ENCODE measurements at regions of chr16 and their contacts with region 1.

Region 1: GRCh38 chr16:14632692-14633569 is at the start of gene BFAR:
- DNase-seq: peak; percentile 87 to 99
- H3K4me3 ChIP-seq: peak within 1 kb of the TSS; percentile 88
- H3K27ac ChIP-seq: peak within 1 kb of the TSS; percentile 69
- H3K4me1 ChIP-seq: peaks cover 33% of the 10 kb centered on the region
- H3K27me3 ChIP-seq: no peaks in the 10 kb centered on the region
- CTCF ChIP-seq: no peak
- total RNA-seq, gene BFAR: 94.8 and 97.9 TPM in 2 replicates

Region 2: DNA sequence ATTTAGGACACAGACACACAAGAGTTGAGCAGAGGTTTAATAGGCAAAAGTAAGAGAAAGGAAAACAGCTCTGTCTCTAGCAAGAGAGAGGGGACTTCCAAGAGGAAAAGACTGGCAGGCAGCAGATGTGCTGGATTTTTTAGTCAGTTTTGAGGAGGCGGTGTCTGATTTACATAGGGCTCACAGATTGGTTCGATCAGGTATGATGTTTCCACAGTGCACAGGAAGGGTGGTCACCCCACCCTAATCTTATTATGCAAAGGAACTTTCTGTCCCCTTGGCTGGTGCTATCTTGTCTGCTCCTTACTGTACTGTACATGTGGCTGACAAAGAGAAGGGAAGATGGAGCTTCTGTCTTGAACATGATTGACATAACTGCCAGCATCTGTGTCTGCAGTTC is 25.1 kb after region 1 on chr16:
- CTCF ChIA-PET with region 1: interaction called, 11 read pairs
- POLR2A ChIA-PET with region 1: interaction called, 5 read pairs
- intact Hi-C with region 1: no loop called
- DNase-seq: no peak
- H3K4me3 ChIP-seq: no peak overlapping the region
- H3K27ac ChIP-seq: 0 out of 2 replicates have a peak overlapping the region, but pooled peaks have one; percentile 23
- H3K4me1 ChIP-seq: peaks cover 21% of the 10 kb centered on the region
- H3K27me3 ChIP-seq: no peaks in the 10 kb centered on the region
- CTCF ChIP-seq: no peak

Region 3: DNA sequence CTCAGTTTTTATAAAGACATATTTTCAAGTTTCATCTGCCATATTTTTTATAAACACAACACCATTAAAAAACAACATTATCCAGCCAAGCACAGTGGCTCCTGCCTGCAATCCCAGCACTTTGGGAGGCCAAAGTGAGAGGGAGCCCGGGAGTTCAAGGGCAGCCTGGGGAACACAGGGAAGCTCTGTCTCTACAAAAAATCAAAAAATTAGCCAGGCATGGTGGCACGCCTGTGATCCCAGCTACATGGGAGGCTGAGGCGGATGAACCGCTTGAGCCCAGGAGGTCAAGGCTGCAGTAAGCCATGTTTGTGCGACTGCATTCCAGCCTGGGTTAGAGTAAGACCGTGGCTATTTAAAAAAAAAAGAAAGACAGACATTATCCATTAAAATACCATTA is 440.2 kb after region 1 on chr16:
- CTCF ChIA-PET with region 1: no interaction called
- POLR2A ChIA-PET with region 1: no interaction called
- intact Hi-C with region 1: no loop called
- DNase-seq: no peak
- H3K4me3 ChIP-seq: no peak overlapping the region
- H3K27ac ChIP-seq: no peak overlapping the region
- H3K4me1 ChIP-seq: no peaks in the 10 kb centered on the region
- H3K27me3 ChIP-seq: no peaks in the 10 kb centered on the region
- CTCF ChIP-seq: no peak